Activated CD4-positive, alpha-beta T cell treated with anti-CD3 and anti-CD28 coated beads for 36 hours (primary cell): ENCODE measurements at regions of chr2 and their contacts with region 1.

Region 1: DNA sequence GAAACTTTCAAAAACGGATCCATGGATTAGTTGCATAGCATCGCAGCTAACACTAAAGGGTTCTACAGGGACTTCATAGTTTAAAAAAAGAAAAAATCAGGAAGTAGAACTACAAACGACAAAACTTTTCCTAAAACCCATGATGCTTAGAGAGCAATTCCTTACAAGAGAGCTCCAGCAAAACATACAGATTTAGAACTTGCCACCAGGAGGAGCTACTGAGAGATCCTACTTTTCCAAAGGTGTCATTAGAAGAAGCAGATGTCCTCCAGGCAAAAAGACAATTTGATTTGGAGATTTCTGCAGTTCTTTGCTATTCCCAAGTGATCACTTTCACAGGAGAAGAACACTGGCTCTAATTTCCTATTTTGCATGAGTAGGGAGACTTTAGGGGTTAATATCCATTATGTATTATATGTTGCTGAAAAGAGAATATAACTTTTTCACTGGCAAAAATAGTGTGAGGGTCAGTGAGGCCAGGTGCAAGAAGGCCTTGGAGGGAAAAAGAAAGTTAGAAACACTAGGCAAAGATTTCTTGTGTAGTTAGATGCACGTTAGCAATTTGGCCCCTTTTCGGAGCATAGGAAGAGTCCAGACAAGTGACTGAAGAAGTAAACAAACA is 436.2 kb downstream of the SUCLG1 start:
- DNase-seq: peak; percentile 9
- ATAC-seq: no peak
- H3K4me3 Mint-ChIP-seq: no peak overlapping the region
- H3K27ac Mint-ChIP-seq: no peak overlapping the region
- H3K4me1 Mint-ChIP-seq: no peaks in the 10 kb centered on the region
- H3K27me3 Mint-ChIP-seq: no peaks in the 10 kb centered on the region

Region 2: DNA sequence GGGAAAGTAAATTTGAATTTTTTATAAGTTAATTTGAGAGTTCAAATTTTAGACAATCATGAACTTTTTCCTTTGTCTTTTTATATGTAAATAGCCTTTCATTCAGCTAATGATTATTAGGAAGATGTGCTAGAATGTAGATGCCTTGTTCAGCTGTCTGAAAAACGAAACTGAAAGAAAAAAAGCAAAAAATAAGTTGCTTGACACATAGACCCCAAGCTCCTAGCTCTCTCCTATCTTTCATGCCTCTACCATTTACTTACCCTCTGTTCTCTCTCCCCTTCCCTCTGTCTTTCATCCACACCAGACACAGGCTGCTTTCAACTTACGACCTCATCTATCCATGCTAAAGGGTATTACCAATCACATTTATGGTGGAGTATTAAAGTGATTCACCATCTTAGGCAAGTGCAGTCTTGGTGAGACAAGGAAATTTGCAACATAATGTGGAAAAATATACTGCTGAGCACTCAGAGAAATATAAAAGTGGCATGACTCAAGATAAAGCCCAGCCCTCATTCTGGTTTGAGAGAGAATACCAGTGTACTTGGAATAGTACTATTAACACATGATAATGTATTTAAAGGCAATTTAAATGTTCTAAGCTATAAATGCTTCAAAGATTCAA is 10.5 kb after region 1 on chr2:
- CTCF ChIA-PET with region 1: interaction called, 13 read pairs
- POLR2A ChIA-PET with region 1: no interaction called
- intact Hi-C with region 1: no loop called
- DNase-seq: no peak
- ATAC-seq: no peak
- H3K4me3 Mint-ChIP-seq: no peak overlapping the region
- H3K27ac Mint-ChIP-seq: no peak overlapping the region
- H3K4me1 Mint-ChIP-seq: peaks cover 3% of the 10 kb centered on the region
- H3K27me3 Mint-ChIP-seq: no peaks in the 10 kb centered on the region

Region 3: DNA sequence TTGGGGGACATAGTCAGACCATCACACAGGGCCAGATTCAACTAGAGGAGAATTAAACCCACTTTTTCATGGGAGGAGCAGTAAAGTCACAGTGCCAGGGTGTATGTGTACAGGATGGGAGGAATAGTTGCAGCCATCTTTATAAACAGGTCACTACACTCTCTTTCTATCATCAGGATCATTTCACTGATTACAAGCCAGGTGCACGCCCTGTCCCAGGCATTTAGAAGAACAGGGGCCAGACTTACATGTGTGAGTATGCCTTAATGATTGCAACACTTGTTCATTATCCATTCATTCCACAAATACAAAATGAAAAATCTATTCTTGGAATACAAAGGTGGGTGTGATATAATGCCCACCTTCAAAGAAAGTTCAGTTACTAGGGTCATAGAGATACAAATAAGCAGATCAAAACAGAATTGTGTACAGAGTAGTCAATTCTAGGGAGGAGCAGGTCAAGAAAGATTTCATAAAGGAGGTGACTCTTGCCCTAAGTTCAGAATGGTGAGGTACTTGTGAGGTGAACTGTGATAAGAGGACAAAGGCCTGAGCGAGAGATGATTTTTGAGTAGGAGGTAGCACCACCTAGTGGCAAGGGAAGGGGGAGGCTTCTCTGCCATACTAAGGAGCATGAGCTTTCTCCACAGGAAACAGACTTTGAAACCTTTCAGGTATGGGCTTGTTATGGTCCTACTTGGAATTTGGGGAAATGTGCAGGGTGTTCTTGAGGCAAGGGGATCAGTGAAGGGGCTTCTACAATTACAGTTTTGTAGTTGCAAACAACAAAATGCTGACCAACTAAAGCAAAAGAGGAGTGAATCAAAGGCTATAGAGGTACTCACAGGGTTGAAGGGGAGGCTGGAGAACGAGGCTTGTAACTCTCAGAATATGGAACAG is 279.8 kb after region 1 on chr2:
- CTCF ChIA-PET with region 1: interaction called, 8 read pairs
- POLR2A ChIA-PET with region 1: no interaction called
- intact Hi-C with region 1: loop called (anchors 1 to 2 kb)
- DNase-seq: peak; percentile 59
- ATAC-seq: peak; percentile 81
- H3K4me3 Mint-ChIP-seq: no peak overlapping the region
- H3K27ac Mint-ChIP-seq: no peak overlapping the region
- H3K4me1 Mint-ChIP-seq: no peaks in the 10 kb centered on the region
- H3K27me3 Mint-ChIP-seq: peaks cover 9% of the 10 kb centered on the region

Region 4: DNA sequence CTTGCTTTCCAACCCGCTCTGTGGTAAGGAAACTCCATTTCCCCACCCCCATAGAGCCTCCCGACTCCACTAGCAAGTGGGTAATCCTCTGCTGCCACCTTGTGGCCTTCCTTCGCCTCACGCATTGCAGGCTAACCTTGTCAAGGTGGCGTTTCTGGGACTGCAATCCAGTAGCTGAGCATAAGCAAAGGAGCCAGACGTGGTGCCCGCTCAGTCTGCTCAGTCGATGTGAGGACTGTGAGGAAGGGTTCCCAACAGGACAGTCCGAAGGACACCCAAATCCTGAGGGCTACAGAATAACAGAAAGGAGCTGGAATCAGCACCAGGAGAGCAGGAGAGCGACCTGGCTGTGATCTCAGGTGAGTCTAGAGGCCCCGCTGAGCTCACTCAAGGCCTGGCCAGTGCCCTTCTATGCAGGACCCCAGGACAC is 292.0 kb after region 1 on chr2:
- CTCF ChIA-PET with region 1: interaction called, 13 read pairs
- POLR2A ChIA-PET with region 1: no interaction called
- intact Hi-C with region 1: no loop called
- DNase-seq: peak; percentile 89
- ATAC-seq: peak; percentile 90
- H3K4me3 Mint-ChIP-seq: no peak overlapping the region
- H3K27ac Mint-ChIP-seq: no peak overlapping the region
- H3K4me1 Mint-ChIP-seq: no peaks in the 10 kb centered on the region
- H3K27me3 Mint-ChIP-seq: peaks cover 2% of the 10 kb centered on the region

Region 5: DNA sequence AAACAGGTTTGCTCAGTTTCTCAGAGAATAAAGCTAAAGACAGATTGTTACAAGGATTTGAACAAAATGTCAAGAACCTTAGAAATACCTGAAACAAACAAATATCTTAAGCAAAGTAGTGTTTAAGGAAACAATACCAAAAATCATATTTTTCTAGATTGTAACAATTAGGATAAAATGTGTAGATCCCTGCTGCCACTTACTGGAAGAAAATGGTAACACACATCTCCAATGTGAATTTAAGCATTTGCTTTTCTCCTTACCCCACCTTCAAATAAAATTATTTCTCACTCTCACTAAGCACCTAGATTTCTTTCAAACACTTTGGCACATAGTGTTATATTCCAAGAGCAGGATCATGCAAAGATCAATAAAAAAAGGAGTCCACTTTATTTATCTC is 401.2 kb after region 1 on chr2:
- CTCF ChIA-PET with region 1: no interaction called
- POLR2A ChIA-PET with region 1: no interaction called
- intact Hi-C with region 1: loop called in 1 of 2 experiments (anchors 5 kb)
- DNase-seq: no peak
- ATAC-seq: no peak
- H3K4me3 Mint-ChIP-seq: no peak overlapping the region
- H3K27ac Mint-ChIP-seq: no peak overlapping the region
- H3K4me1 Mint-ChIP-seq: no peaks in the 10 kb centered on the region
- H3K27me3 Mint-ChIP-seq: no peaks in the 10 kb centered on the region